Activated B cell treated with CpG ODN at 0.5 μM for 24 hours (primary cell): ENCODE measurements at regions of chr12 and their contacts with region 1.

Region 1: DNA sequence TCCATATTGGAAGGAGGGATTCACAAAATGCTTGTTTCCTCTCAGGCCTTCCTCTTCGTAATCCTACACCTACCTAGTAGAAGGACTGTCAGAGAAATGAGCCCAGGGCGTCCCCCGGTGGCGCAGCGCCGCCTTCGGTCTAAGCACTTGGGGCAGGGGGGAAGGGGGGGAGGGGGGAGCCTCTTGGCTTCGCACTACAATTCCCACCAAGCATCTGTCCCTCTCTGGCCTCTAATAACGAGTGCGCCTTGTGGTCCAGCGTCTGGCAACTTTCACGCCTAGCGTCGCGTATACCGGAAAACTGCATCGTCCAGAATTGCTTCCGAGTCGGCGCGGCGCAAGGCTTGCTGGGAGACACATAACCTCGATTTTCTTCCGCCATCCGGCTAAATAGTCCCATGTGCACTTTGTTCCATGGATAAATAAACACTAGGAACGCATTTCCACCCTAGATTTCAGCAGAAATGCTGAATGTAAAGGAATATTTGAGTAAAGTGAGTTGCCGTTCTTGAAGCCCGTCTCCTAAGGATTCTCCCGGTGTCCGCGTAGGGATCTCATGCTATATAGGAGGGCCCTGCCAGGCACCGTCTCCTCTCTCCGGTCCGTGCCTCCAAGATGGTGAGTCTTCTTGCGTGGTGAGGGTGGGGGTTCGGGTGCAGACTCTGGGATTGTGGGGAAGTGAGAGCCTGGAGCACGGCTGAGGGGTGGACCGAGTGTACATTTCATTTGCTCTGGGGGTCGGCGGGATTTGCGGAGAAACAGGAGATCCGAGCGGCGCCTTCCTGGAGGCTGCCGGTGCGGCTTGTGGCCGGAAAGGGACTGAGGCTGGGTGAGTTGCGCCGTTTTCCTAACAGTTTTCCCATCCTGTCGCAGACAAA is at the start of gene RPS26:
- DNase-seq: peak; percentile 77
- ATAC-seq: peak; percentile 93
- H3K4me3 Mint-ChIP-seq: peak within 1 kb of the TSS; percentile 99
- H3K27ac Mint-ChIP-seq: peak within 1 kb of the TSS; percentile 98
- H3K4me1 Mint-ChIP-seq: peaks cover 33% of the 10 kb centered on the region
- H3K27me3 Mint-ChIP-seq: no peaks in the 10 kb centered on the region
- CTCF ChIP-seq: no peak
- total RNA-seq, gene RPS26: 23.9 and 28.1 TPM in 2 replicates

Region 2: DNA sequence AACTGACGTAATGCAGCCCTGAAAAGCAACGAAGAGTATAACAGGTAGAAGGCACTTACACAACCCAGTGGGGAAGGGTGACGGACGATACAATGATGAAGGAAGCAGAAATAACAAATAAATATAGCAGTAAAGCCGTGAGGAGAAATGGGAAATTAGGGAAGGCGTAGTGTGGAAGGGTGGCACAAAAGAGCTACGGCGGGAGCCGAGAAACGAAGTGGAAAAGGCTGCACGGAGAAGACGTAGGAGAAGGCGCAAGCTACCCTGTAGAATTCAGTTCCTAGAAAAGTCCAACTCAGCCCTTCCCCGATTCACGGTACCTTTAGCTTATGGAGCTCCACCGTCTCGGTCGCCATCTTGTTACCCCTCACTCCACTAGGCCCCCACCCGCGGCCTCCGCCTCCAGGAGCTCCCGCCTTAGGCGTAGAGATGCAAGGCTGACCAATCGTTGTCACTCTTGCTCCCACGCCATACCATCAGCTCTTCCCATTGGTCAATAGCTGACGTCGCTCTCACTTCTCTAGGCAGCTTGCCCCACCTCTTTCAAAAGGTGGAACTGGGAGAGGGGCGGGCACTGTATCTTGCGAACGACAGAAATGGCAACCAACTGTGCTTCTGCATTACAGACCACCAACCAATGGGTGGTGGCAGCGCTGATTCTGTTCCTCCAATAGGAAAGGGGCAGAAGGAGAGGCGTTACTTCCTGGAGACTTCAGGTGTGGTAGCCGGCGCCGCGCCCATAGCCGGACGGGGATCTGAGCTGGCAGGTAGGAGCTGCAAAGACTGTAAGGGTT is 224.2 kb before region 1 on chr12 and contains the starts of genes ORMDL2 and SARNP:
- CTCF ChIA-PET with region 1: interaction called, 4 read pairs
- POLR2A ChIA-PET with region 1: interaction called, 5 read pairs
- intact Hi-C with region 1: loop called (anchors 1 kb)
- DNase-seq: peak; percentile 80
- ATAC-seq: peak; percentile 94
- H3K4me3 Mint-ChIP-seq: no peak within 1 kb of the TSS
- H3K27ac Mint-ChIP-seq: no peak within 1 kb of the TSS
- H3K4me1 Mint-ChIP-seq: peaks cover 21% of the 10 kb centered on the region
- H3K27me3 Mint-ChIP-seq: no peaks in the 10 kb centered on the region
- CTCF ChIP-seq: no peak
- total RNA-seq, gene ORMDL2: 68.0 and 70.9 TPM in 2 replicates
- total RNA-seq, gene SARNP: 53.6 and 58.7 TPM in 2 replicates

Region 3: GRCh38 chr12:55973598-55974307 is 68.0 kb before region 1 on chr12 and contains the start of gene RAB5B:
- CTCF ChIA-PET with region 1: no interaction called
- POLR2A ChIA-PET with region 1: interaction called, 8 read pairs
- intact Hi-C with region 1: loop called (anchors 1 kb)
- DNase-seq: peak; percentile 83
- ATAC-seq: peak; percentile 87
- H3K4me3 Mint-ChIP-seq: no peak within 1 kb of the TSS
- H3K27ac Mint-ChIP-seq: no peak within 1 kb of the TSS
- H3K4me1 Mint-ChIP-seq: peaks cover 27% of the 10 kb centered on the region
- H3K27me3 Mint-ChIP-seq: no peaks in the 10 kb centered on the region
- CTCF ChIP-seq: no peak
- total RNA-seq, gene RAB5B: 82.1 and 83.8 TPM in 2 replicates

Region 4: DNA sequence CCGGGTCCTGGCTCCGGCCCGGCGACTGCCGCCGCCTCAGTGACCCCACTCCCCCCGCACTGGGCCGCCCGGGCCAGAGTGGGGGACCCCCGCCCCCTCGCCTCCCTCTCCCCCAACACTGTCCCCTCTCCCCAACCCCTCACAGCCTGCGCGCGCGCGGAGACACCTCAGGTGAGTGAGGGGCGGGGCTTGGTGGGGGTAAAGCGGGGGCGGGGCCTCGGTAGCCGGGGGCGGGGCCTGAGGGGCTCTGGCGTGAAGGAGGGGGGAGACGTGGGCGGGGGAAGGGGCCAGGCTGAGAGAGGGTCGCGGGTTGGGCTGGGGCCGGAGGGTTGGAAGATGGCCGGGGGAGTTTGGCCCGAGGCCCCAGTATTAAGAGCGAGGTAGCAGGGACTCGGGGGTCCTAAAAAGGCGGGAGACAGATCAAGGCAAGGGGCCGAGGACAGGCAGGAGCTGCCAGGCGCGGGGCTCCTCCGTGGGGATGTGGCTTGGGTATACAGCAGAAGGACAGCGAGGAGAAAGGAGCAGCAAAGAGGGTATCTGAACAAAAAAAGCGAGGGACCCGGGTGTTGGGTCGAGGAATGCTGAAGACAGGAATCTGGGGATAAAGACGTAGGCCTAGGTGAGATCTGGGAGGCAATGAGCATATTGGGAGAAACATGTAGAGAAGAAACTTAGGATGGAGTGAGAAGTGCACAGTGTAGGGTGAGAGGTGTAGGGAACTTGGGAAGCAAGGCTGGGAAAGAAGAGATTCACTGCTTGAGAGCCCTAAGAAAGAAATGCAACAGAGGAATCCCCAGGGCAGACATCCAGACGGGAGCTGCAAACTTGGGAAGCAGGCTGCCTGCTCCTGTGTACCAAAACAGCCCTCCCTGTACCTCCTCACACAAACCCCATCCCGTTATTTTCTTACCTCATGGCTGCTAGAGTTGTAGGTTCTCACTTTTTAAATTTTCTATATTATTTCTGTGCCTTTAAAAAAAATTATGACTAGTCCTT is 33.9 kb before region 1 on chr12:
- CTCF ChIA-PET with region 1: no interaction called
- POLR2A ChIA-PET with region 1: interaction called, 8 read pairs
- intact Hi-C with region 1: loop called (anchors 1 kb)
- DNase-seq: peak; percentile 71
- ATAC-seq: peak; percentile 92
- H3K4me3 Mint-ChIP-seq: peak overlapping the region; percentile 88
- H3K27ac Mint-ChIP-seq: peak overlapping the region; percentile 79
- H3K4me1 Mint-ChIP-seq: peaks cover 9% of the 10 kb centered on the region
- H3K27me3 Mint-ChIP-seq: no peaks in the 10 kb centered on the region
- CTCF ChIP-seq: no peak

Region 5: GRCh38 chr12:56258057-56258819 is 216.4 kb after region 1 on chr12 and contains the start of gene ANKRD52:
- CTCF ChIA-PET with region 1: interaction called, 3 read pairs
- POLR2A ChIA-PET with region 1: no interaction called
- intact Hi-C with region 1: loop called (anchors 2 kb)
- DNase-seq: peak; percentile 89
- ATAC-seq: peak; percentile 94
- H3K4me3 Mint-ChIP-seq: peak within 1 kb of the TSS; percentile 91
- H3K27ac Mint-ChIP-seq: peak within 1 kb of the TSS; percentile 77
- H3K4me1 Mint-ChIP-seq: peaks cover 21% of the 10 kb centered on the region
- H3K27me3 Mint-ChIP-seq: no peaks in the 10 kb centered on the region
- CTCF ChIP-seq: peak; percentile 28
- total RNA-seq, gene ANKRD52: 44.1 and 44.8 TPM in 2 replicates